Activated T-helper 2 cell treated with anti-CD3 and anti-CD28 coated beads, Interferon-gamma antibody, Interleukin-2, Interleukin-4, amounts not matched to agents 10 μg/mL and 5 μg/mL and 100 μg/mL, durations not matched to agents 14 hours and 24 hours and 36 hours (primary cell): ENCODE measurements at regions of chr15 and their contacts with region 1.

Region 1: GRCh38 chr15:58749532-58750337 is at the start of gene ADAM10:
- DNase-seq: peak; percentile 97
- H3K4me3 Mint-ChIP-seq: peak within 1 kb of the TSS; percentile 96
- H3K27ac Mint-ChIP-seq: peak within 1 kb of the TSS; percentile 99
- H3K4me1 Mint-ChIP-seq: peaks cover 32% of the 10 kb centered on the region
- H3K27me3 Mint-ChIP-seq: no peaks in the 10 kb centered on the region
- total RNA-seq, gene ADAM10: 136 and 141 TPM in 2 replicates

Region 2: DNA sequence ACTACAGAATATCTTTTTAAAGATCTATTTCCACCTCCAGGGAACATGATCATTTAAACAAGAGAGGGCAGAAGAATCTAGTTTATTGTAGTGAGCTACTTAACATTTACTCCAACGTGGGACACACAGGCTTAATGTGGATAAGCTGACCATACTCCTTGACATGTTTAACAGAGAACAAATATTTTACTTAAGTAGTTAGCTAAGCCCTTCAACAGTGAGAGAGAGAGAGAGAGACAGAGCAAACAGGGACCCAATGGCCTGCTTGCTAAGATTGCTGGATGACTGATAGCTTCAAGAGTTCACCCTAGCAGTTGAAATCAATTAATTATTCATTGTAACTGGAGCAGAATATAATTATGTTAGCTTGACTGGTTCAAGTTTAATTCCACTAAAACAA is 158.8 kb before region 1 on chr15:
- intact Hi-C with region 1: loop called (anchors 5 kb)
- DNase-seq: no peak
- H3K4me3 Mint-ChIP-seq: no peak overlapping the region
- H3K27ac Mint-ChIP-seq: no peak overlapping the region
- H3K4me1 Mint-ChIP-seq: peaks cover 28% of the 10 kb centered on the region
- H3K27me3 Mint-ChIP-seq: no peaks in the 10 kb centered on the region

Region 3: DNA sequence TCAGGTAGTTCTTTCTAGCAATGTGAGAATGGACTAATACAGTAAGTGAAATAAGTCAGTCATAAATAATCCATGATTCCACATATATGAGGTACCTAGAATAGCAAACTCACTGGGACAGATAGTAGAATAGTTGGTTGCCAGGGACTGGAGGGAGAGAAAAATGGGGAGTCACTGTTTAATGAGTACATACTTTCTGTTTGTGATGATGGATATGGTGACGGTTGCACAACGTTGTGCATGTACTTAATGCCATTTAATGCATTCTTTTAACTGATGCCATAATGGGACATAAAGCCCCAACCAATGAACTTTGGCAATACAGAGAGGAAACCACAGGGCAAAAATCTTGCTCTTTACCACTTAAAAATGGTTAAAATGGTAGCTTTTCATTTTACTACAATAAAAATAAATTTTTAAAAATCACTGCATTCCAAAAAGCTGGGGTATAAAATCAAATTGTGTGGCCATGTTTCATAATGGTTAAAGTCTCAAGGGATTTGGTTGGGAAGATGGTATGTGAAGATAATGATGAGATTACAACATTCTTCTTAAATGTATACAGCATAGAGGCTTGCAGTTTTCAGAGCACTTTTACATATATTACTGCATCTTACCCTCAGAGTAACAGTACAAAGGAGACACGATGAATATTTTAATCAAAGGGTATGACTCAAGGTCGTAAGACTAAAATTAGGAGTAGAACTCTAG is 45.4 kb before region 1 on chr15:
- intact Hi-C with region 1: loop called (anchors 5 kb)
- DNase-seq: no peak
- H3K4me3 Mint-ChIP-seq: no peak overlapping the region
- H3K27ac Mint-ChIP-seq: no peak overlapping the region
- H3K4me1 Mint-ChIP-seq: peaks cover 71% of the 10 kb centered on the region
- H3K27me3 Mint-ChIP-seq: no peaks in the 10 kb centered on the region